Right cardiac atrium (tissue), 5 donors: ENCODE measurements at regions of chr14 and their contacts with region 1.

Region 1: GRCh38 chr14:64294672-64295413 is 672 bp upstream of the ESR2 start:
- DNase-seq: peak; percentile 67 to 91 (median 86)
- ATAC-seq: peak; percentile 88 to 89
- H3K4me3 ChIP-seq: peak overlapping the region; percentile 41
- H3K27ac ChIP-seq: no peak overlapping the region
- H3K4me1 ChIP-seq: no peaks in the 10 kb centered on the region
- H3K27me3 ChIP-seq: no peaks in the 10 kb centered on the region

Region 2: GRCh38 chr14:64159588-64159987 is 135.3 kb before region 1 on chr14:
- intact Hi-C with region 1: loop called in 3 of 4 experiments (anchors 2 to 10 kb)
- DNase-seq: no peak
- ATAC-seq: no peak
- H3K4me3 ChIP-seq: no peak overlapping the region
- H3K27ac ChIP-seq: no peak overlapping the region
- H3K4me1 ChIP-seq: no peaks in the 10 kb centered on the region
- H3K27me3 ChIP-seq: no peaks in the 10 kb centered on the region